CD8-positive, alpha-beta T cell (primary cell): ENCODE measurements at regions of chr6 and their contacts with region 1.

Region 1: DNA sequence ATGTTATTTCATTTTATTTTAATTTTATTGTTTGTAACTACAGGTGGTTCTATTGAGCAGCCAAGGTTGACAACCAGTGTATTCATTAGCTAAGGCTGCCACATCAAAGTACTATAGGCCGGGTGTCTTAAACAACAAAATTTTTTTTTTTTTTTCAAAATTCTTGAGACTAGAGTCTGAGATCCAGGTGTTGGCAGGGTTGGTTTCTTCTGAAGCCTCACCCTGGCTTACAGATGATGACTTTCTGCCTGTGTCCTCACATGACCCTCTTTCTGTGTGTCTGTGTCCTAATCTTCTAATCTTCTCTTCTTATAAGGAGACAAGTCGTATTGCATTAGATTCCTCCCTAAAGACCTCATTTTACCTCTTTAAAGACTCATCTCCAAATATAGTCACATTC is 208.4 kb downstream of the MANEA start:
- DNase-seq: no peak
- ATAC-seq: no peak
- H3K4me3 ChIP-seq: no peak overlapping the region
- H3K4me3 Mint-ChIP-seq: no peak overlapping the region
- H3K27ac ChIP-seq: no peak overlapping the region
- H3K27ac Mint-ChIP-seq: no peak overlapping the region
- H3K4me1 ChIP-seq: no peaks in the 10 kb centered on the region
- H3K4me1 Mint-ChIP-seq: no peaks in the 10 kb centered on the region
- H3K27me3 ChIP-seq: no peaks in the 10 kb centered on the region
- H3K27me3 Mint-ChIP-seq: no peaks in the 10 kb centered on the region
- CTCF ChIP-seq: no peak

Region 2: GRCh38 chr6:95413789-95414188 is 372.0 kb before region 1 on chr6:
- CTCF ChIA-PET with region 1: no interaction called
- POLR2A ChIA-PET with region 1: no interaction called
- intact Hi-C with region 1: no loop called
- DNase-seq: no peak
- ATAC-seq: no peak
- H3K4me3 ChIP-seq: no peak overlapping the region
- H3K4me3 Mint-ChIP-seq: no peak overlapping the region
- H3K27ac ChIP-seq: no peak overlapping the region
- H3K27ac Mint-ChIP-seq: no peak overlapping the region
- H3K4me1 ChIP-seq: no peaks in the 10 kb centered on the region
- H3K4me1 Mint-ChIP-seq: no peaks in the 10 kb centered on the region
- H3K27me3 ChIP-seq: no peaks in the 10 kb centered on the region
- H3K27me3 Mint-ChIP-seq: no peaks in the 10 kb centered on the region
- CTCF ChIP-seq: no peak

Region 3: GRCh38 chr6:95815389-95816056 is 29.7 kb after region 1 on chr6:
- CTCF ChIA-PET with region 1: no interaction called
- POLR2A ChIA-PET with region 1: no interaction called
- intact Hi-C with region 1: loop called in 1 of 2 experiments (anchors 1 kb)
- DNase-seq: no peak
- ATAC-seq: no peak
- H3K4me3 ChIP-seq: no peak overlapping the region
- H3K4me3 Mint-ChIP-seq: no peak overlapping the region
- H3K27ac ChIP-seq: no peak overlapping the region
- H3K27ac Mint-ChIP-seq: no peak overlapping the region
- H3K4me1 ChIP-seq: no peaks in the 10 kb centered on the region
- H3K4me1 Mint-ChIP-seq: no peaks in the 10 kb centered on the region
- H3K27me3 ChIP-seq: no peaks in the 10 kb centered on the region
- H3K27me3 Mint-ChIP-seq: no peaks in the 10 kb centered on the region
- CTCF ChIP-seq: no peak

Region 4: DNA sequence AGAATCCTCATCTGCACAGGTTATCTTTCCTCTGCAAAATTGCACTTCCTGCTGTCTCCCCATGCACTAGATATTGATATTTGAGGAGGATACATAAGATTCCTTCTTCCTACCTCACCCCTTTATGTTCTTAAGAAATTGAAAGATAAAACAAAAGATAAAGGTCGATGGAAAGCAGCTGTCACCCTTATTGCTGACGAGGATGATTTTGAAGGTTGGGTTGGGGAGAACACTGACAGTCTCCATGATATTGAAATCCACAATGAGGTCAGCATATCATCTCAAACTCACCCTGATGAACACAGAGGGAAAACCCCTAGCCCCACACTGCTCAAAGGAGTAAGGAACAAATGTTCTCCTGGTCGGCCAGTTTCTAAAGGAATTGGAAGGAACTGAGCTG is 119.3 kb after region 1 on chr6:
- CTCF ChIA-PET with region 1: no interaction called
- POLR2A ChIA-PET with region 1: no interaction called
- intact Hi-C with region 1: no loop called
- DNase-seq: no peak
- ATAC-seq: no peak
- H3K4me3 ChIP-seq: no peak overlapping the region
- H3K4me3 Mint-ChIP-seq: no peak overlapping the region
- H3K27ac ChIP-seq: no peak overlapping the region
- H3K27ac Mint-ChIP-seq: no peak overlapping the region
- H3K4me1 ChIP-seq: no peaks in the 10 kb centered on the region
- H3K4me1 Mint-ChIP-seq: no peaks in the 10 kb centered on the region
- H3K27me3 ChIP-seq: no peaks in the 10 kb centered on the region
- H3K27me3 Mint-ChIP-seq: no peaks in the 10 kb centered on the region
- CTCF ChIP-seq: no peak